ENCODE measurements at regions of chr6 and their contacts with region 1.

Region 1: DNA sequence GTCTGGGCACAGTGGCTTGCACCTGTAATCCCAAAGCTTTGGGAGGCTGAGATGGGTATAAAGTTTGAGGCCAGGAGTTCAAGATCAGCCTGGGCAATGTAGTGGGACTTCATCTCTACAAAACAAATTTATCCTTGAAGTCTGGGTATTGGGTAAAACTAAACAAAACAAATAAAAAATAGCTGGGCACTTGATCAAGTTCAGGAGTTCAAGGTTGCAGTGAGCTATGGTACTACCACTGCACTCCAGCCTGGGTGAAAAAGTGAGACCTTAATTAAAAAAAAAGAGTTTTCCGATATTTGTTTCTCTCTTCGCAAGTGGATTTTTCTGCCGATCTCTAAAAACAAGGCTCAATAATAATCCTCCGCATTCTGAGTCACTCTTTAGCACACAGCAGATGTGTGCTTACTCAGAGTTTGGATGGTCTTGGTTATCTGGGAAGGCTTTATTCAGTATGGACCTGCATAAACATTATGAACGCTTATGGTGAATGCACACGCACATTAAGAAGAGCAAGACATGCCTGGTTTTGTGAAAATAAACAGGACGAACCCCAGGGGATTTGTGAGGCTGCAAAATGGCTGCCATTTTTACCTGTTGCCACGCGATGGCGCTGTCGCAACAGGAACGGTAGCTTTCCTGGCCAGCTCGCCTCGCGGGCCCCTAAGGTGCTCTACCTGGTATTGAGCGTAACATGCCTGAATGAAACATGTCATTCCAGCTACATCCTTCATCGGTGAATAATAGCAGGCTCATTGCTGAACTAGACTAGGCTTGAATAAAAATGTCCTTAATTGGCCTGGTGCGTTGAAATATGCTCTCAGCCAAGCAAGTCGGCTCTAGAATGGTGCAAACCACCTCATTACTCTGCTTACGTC is 6.0 kb downstream of the OPN5 start:
- DNase-seq: peak; percentile 70
- H3K4me3 Mint-ChIP-seq: no peak overlapping the region
- H3K27ac Mint-ChIP-seq: no peak overlapping the region
- H3K4me1 Mint-ChIP-seq: peaks cover 5% of the 10 kb centered on the region
- H3K27me3 Mint-ChIP-seq: peaks cover 30% of the 10 kb centered on the region

Region 2: DNA sequence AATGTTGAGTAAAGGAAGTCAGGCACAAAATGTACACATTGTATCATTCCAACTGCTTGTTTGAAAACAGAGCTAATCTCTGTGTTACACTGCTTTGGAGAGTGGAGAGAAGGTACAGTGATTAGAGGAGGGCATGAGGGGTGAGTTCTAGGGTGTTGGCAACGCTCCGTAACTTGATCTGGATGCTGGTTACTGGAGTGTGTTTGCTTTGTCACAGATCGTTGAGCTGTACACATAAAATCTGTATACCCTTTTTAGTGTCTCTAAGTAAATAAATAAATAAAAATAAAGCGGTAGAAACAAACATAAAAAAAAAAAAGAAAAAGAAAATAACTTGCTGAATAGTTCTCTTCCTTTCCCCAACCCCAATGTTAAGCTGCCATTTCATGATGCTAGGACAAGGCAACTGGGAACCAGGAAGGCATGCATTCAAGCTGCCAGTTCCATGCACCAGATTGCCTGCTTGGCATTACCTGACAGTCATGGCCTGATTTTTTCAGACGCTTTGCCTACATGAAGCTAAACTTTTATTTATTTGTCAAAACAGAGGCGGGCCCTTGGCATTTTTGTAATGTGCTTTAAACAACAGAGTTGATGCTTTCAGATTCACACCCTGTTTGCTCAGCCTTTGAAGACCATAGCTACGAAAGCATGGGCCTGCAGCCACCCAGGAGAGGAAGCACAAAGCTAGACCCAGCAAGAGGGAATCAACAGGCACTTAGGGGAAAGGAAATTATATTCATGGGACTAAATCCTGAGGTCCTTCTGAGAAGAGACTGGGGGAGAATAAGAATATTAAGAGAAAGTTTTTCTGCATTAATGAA is 499.4 kb before region 1 on chr6:
- CTCF ChIA-PET with region 1: no interaction called
- intact Hi-C with region 1: no loop called
- DNase-seq: no peak
- H3K4me3 Mint-ChIP-seq: no peak overlapping the region
- H3K27ac Mint-ChIP-seq: no peak overlapping the region
- H3K4me1 Mint-ChIP-seq: no peaks in the 10 kb centered on the region
- H3K27me3 Mint-ChIP-seq: peaks cover 5% of the 10 kb centered on the region

Region 3: GRCh38 chr6:48611332-48611731 is 823.5 kb after region 1 on chr6:
- CTCF ChIA-PET with region 1: no interaction called
- intact Hi-C with region 1: no loop called
- DNase-seq: no peak
- H3K4me3 Mint-ChIP-seq: no peak overlapping the region
- H3K27ac Mint-ChIP-seq: no peak overlapping the region
- H3K4me1 Mint-ChIP-seq: no peaks in the 10 kb centered on the region
- H3K27me3 Mint-ChIP-seq: no peaks in the 10 kb centered on the region

Region 4: DNA sequence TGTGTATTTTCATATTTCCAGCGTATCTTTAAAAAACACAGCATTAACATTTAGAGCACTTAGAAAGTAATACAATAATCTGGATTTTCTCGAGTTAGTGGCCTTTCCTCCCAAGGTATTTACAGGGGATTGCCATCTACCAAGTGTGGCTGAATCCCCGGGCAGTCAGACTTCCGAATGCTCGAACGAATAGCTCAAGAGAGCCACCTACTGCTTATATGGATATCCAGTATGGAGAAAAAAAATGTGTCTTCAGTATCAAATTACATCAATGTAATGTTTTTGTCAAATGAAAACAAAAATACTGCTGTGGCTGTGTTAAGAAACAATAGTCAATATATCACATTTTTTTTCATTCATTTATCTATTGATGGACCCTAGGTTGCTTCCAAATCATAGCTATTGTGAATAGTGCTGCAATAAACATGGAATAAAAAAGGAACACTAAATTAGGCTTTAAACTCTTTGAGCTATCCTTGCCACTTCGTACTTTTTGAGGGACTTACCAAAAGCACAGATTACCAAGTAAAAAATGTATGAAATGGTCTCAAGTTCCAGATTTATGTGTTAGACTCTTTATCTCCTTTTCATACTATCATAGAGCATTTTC is 977.6 kb after region 1 on chr6:
- CTCF ChIA-PET with region 1: no interaction called
- intact Hi-C with region 1: loop called (anchors 1 kb)
- DNase-seq: no peak
- H3K4me3 Mint-ChIP-seq: no peak overlapping the region
- H3K27ac Mint-ChIP-seq: no peak overlapping the region
- H3K4me1 Mint-ChIP-seq: no peaks in the 10 kb centered on the region
- H3K27me3 Mint-ChIP-seq: no peaks in the 10 kb centered on the region

Region 5: GRCh38 chr6:49409951-49410542 is 1622.2 kb after region 1 on chr6:
- CTCF ChIA-PET with region 1: interaction called, 9 read pairs
- intact Hi-C with region 1: loop called (anchors 1 kb)
- DNase-seq: peak; percentile 77
- H3K4me3 Mint-ChIP-seq: no peak overlapping the region
- H3K27ac Mint-ChIP-seq: no peak overlapping the region
- H3K4me1 Mint-ChIP-seq: no peaks in the 10 kb centered on the region
- H3K27me3 Mint-ChIP-seq: peaks cover 5% of the 10 kb centered on the region

Measured in activated naive CD4-positive, alpha-beta T cell treated with anti-CD3 and anti-CD28 coated beads for 36 hours (primary cell).